Ovary (tissue), 10 donors: ENCODE measurements at regions of chr7 and their contacts with region 1.

Region 1: GRCh38 chr7:41940760-41941343 is 238.0 kb upstream of the INHBA start:
- DNase-seq: peak; percentile 65 to 77 (median 73)
- H3K4me3 ChIP-seq: no peak overlapping the region
- H3K27ac ChIP-seq: no peak overlapping the region
- H3K4me1 ChIP-seq: no peaks in the 10 kb centered on the region
- H3K27me3 ChIP-seq: no peaks in the 10 kb centered on the region
- CTCF ChIP-seq: peak; percentile 74 to 89 (median 76)
- EP300 ChIP-seq: no peak
- POLR2A ChIP-seq: no peak

Region 2: GRCh38 chr7:42237162-42237821 is 296.4 kb after region 1 on chr7 and contains the start of gene GLI3:
- intact Hi-C with region 1: loop called in 1 of 4 experiments (anchors 5 kb)
- DNase-seq: peak; percentile 89 to 92 (median 90)
- H3K4me3 ChIP-seq: peak within 1 kb of the TSS; percentile 64
- H3K27ac ChIP-seq: peak within 1 kb of the TSS; percentile 94 to 98
- H3K4me1 ChIP-seq: peaks cover 1% of the 10 kb centered on the region
- H3K27me3 ChIP-seq: no peaks in the 10 kb centered on the region
- CTCF ChIP-seq: peak in 1 of 3 donors; percentile 41
- EP300 ChIP-seq: peak; percentile 24
- POLR2A ChIP-seq: peak; percentile 55
- total RNA-seq, gene GLI3: 10.3 to 67.1 (median 54.2) TPM

Region 3: DNA sequence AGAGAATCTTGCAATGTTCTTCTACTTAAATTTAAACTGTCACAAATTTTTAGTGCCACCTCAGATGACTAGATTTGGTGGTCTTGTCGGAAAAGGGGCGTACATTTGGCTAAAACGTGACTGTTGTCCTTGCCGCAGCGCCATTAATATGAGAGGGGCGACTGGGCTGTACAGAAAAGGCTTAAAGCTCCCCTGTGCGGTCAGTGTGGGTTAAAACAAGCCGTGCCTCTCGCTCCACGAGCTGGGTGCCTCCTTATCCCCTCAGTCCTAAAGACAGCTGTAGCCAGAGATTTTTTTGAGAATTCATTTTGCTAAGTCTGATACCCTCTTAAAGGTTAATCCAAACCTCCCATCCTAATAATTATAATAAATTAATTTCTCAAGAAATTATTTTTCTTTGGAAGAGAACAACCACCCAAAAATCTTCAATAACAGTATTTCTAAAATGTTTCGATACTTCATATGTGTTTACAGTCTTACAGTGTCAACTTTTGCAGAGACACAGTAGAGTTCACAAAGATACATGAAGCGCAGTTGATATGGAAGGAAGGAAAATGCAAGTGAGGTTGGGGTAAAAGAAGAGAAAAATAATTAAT is 902.5 kb after region 1 on chr7:
- intact Hi-C with region 1: loop called in 3 of 4 experiments (anchors 2 to 5 kb)
- DNase-seq: peak; percentile 30 to 54 (median 50)
- H3K4me3 ChIP-seq: peak overlapping the region; percentile 22
- H3K27ac ChIP-seq: no peak overlapping the region
- H3K4me1 ChIP-seq: no peaks in the 10 kb centered on the region
- H3K27me3 ChIP-seq: no peaks in the 10 kb centered on the region
- CTCF ChIP-seq: peak; percentile 25 to 44 (median 28)
- EP300 ChIP-seq: no peak
- POLR2A ChIP-seq: no peak